ENCODE measurements at regions of chr18 and their contacts with region 1.

Region 1: GRCh38 chr18:26383454-26384270 is 157.4 kb downstream of the TAF4B start:
- DNase-seq: peak; percentile 33
- H3K4me3 ChIP-seq: no peak overlapping the region
- H3K27ac ChIP-seq: no peak overlapping the region
- H3K4me1 ChIP-seq: peaks cover 14% of the 10 kb centered on the region
- H3K27me3 ChIP-seq: no peaks in the 10 kb centered on the region
- CTCF ChIP-seq: peak; percentile 70 to 71

Region 2: DNA sequence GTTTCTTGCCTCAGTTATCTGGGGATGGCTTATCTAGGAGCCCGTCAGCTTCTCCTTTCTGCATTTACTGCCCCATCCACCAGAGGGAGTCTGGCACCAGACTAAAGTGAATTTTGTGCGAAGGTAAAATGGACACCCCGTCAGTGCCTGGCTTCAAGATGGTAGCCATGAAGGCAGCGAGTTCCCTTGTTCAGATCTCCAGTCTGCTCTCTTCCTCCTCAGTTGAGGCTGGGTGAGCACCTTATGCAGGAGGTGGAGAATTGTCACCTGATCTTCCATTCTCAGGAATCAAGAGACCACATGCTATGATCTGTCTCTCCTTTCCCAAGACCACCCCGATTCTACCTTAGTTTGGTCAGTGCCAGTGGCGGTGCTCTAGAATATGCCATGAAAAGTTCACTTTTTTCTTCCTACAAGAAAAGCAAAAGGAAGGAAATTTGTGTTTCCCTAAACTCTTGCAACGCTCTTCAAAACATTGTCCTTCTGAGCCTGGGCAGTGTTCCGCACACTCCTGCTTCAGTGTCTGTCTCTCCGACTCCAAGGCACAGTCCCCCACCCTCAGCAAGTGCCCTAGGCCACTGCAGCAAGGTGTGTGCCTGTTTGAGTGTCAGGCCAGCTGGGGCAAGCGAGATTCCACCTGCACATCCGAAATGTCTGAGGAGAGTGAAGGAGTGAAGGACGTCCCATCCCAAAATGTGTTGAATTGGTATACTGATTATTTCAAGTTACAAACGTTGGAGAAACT is 461.8 kb before region 1 on chr18:
- CTCF ChIA-PET with region 1: no interaction called
- dilution Hi-C with region 1: no loop called
- in situ Hi-C with region 1: no loop called
- intact Hi-C with region 1: no loop called
- DNase-seq: peak; percentile 31
- H3K4me3 ChIP-seq: no peak overlapping the region
- H3K27ac ChIP-seq: no peak overlapping the region
- H3K4me1 ChIP-seq: no peaks in the 10 kb centered on the region
- H3K27me3 ChIP-seq: no peaks in the 10 kb centered on the region
- CTCF ChIP-seq: peak; percentile 65 to 80

Region 3: GRCh38 chr18:26648509-26649192 is 265.0 kb after region 1 on chr18:
- CTCF ChIA-PET with region 1: no interaction called
- dilution Hi-C with region 1: no loop called
- in situ Hi-C with region 1: loop called in 1 of 2 experiments (anchors 10 kb)
- intact Hi-C with region 1: loop called (anchors 1 kb)
- DNase-seq: no peak
- H3K4me3 ChIP-seq: no peak overlapping the region
- H3K27ac ChIP-seq: no peak overlapping the region
- H3K4me1 ChIP-seq: no peaks in the 10 kb centered on the region
- H3K27me3 ChIP-seq: no peaks in the 10 kb centered on the region
- CTCF ChIP-seq: no peak